GM12878 (cell line): ENCODE measurements at regions of chr6 and their contacts with region 1.

Region 1: DNA sequence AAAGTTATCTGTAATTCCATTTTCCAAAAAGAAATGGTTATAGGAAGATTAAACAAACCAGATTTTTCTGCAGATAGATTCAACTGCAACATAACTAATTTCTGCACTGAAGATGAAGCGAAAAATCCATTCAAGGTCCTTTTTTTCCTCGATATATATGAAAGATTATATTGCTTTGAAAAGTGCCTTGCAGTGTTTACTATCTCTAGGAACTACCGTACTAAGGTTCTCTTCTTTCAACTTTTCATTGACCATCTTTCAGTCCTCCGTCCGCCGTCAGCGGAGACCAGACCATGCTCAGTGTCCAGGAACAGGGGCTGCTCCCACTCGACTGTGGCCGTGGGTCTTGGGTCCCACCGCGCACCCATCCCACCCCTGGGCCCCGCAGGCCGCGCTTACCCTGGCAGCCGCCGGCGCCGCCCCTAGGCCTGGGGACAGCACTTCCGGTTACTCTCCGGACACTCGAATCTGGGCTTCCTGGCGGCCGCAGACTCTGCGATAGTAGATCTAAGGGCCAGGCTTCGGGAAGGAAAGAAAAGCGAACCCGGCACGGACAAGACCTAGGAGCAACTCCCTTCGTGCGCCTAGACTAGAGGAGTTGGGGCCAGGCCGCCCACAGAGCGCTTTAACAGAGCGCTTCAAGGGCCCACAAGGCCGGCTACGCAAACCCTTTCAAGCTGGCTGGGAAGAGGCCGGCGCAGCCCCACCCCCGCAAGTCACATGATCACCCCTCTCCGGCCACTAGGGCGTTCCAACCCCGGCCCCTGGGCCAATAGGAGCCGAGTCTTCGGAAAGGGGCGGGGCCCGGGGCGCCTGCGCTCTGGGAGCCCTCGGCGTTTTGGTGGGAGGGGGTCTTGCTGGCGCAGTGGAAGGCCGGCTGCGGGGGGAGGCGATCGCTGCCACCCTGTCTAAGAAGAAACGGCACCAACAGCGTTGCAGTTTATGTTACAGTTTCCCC is at the start of gene ZNF322:
- DNase-seq: peak; percentile 64
- ATAC-seq: peak; percentile 100
- H3K4me3 ChIP-seq: peak within 1 kb of the TSS; percentile 61
- H3K27ac ChIP-seq: peak within 1 kb of the TSS; percentile 59
- H3K4me1 ChIP-seq: no peaks in the 10 kb centered on the region
- H3K27me3 ChIP-seq: no peaks in the 10 kb centered on the region
- CTCF ChIP-seq: no peak
- EP300 ChIP-seq: no peak
- POLR2A ChIP-seq: peak; percentile 71
- RAD21 ChIP-seq: no peak
- polyA plus RNA-seq, gene ZNF322: 2.7 to 4.0 TPM

Region 2: GRCh38 chr6:27388293-27389197 is 729.2 kb after region 1 on chr6 and contains the start of gene ZNF391:
- CTCF ChIA-PET with region 1: no interaction called
- POLR2A ChIA-PET with region 1: no interaction called
- RAD21 ChIA-PET with region 1: no interaction called
- SMC1A ChIA-PET with region 1: no interaction called
- in situ Hi-C with region 1: loop called (anchors 25 kb)
- intact Hi-C with region 1: no loop called
- DNase-seq: peak; percentile 51
- ATAC-seq: peak; percentile 97
- H3K4me3 ChIP-seq: peak within 1 kb of the TSS; percentile 79
- H3K27ac ChIP-seq: peak within 1 kb of the TSS; percentile 36
- H3K4me1 ChIP-seq: no peaks in the 10 kb centered on the region
- H3K27me3 ChIP-seq: no peaks in the 10 kb centered on the region
- CTCF ChIP-seq: no peak
- EP300 ChIP-seq: no peak
- POLR2A ChIP-seq: peak; percentile 93
- RAD21 ChIP-seq: no peak
- polyA plus RNA-seq, gene ZNF391: 0.42 to 0.57 TPM

Region 3: GRCh38 chr6:27630727-27631608 is 971.6 kb after region 1 on chr6:
- CTCF ChIA-PET with region 1: no interaction called
- POLR2A ChIA-PET with region 1: no interaction called
- RAD21 ChIA-PET with region 1: no interaction called
- SMC1A ChIA-PET with region 1: no interaction called
- in situ Hi-C with region 1: loop called (anchors 25 kb)
- intact Hi-C with region 1: no loop called
- DNase-seq: peak; percentile 49
- ATAC-seq: peak; percentile 97
- H3K4me3 ChIP-seq: peak overlapping the region; percentile 67
- H3K27ac ChIP-seq: no peak overlapping the region
- H3K4me1 ChIP-seq: no peaks in the 10 kb centered on the region
- H3K27me3 ChIP-seq: no peaks in the 10 kb centered on the region
- CTCF ChIP-seq: 0 out of 6 replicates have a peak, but pooled peaks of 1 of the 3 experiments have one; percentile 8
- EP300 ChIP-seq: peak in 1 of 2 experiments; percentile 43; a peak in 1 of 4 replicates
- POLR2A ChIP-seq: no peak
- RAD21 ChIP-seq: no peak

Region 4: DNA sequence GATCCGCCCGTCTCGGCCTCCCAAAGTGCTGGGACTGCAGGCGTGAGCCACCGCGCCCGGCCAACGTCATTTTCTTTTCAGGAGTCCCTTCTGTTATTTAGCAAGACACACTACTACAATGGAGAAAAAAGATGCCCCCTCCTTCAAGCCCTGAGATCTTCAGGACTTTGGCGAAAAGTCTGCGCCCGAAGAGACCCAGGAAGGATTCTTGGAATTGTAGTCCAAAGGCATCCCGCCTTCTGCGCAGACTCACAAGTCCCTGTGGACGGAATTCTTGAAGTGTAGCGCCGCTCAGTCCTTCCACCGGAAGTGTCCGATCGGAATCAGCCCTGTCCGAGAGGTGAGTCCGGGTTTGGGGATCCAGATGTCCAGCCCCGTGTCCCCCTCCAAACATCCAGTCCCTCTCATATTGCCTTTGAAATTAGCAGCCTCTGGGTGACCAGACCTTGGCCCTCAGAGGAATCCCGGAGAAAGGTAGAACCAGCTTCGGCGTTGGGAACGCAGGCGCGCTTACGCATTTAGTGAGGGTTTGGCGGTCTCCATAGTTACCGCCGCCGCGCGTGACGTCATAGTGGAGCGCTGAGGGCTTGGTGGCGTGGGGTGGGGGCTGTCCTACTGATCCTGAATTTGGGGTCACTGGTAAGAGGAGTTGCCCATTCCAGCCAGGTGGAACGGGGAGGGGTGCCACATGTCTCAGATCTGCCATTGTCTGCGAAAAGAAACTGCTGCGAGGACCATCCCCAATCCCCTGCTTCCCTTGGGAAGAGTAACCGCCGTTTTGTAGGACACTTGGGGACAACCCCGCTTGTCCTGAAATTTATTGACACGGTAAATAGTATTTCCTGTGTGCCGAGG is 1421.5 kb after region 1 on chr6:
- CTCF ChIA-PET with region 1: no interaction called
- POLR2A ChIA-PET with region 1: no interaction called
- RAD21 ChIA-PET with region 1: no interaction called
- SMC1A ChIA-PET with region 1: no interaction called
- in situ Hi-C with region 1: loop called (anchors 25 kb)
- intact Hi-C with region 1: no loop called
- DNase-seq: peak; percentile 91
- ATAC-seq: peak; percentile 81
- H3K4me3 ChIP-seq: peak overlapping the region; percentile 79
- H3K27ac ChIP-seq: peak overlapping the region; percentile 94
- H3K4me1 ChIP-seq: peaks cover 6% of the 10 kb centered on the region
- H3K27me3 ChIP-seq: no peaks in the 10 kb centered on the region
- CTCF ChIP-seq: no peak
- EP300 ChIP-seq: peak in 1 of 2 experiments; percentile 6; a peak in 1 of 4 replicates
- POLR2A ChIP-seq: no peak
- RAD21 ChIP-seq: no peak

Region 5: GRCh38 chr6:28335564-28336283 is 1676.4 kb after region 1 on chr6 and contains the start of gene ZSCAN31:
- CTCF ChIA-PET with region 1: no interaction called
- POLR2A ChIA-PET with region 1: no interaction called
- RAD21 ChIA-PET with region 1: no interaction called
- SMC1A ChIA-PET with region 1: no interaction called
- in situ Hi-C with region 1: loop called (anchors 25 kb)
- intact Hi-C with region 1: no loop called
- DNase-seq: peak; percentile 73
- ATAC-seq: peak; percentile 96
- H3K4me3 ChIP-seq: peak within 1 kb of the TSS; percentile 72
- H3K27ac ChIP-seq: peak within 1 kb of the TSS; percentile 97
- H3K4me1 ChIP-seq: peaks cover 14% of the 10 kb centered on the region
- H3K27me3 ChIP-seq: no peaks in the 10 kb centered on the region
- CTCF ChIP-seq: no peak
- EP300 ChIP-seq: no peak
- POLR2A ChIP-seq: peak; percentile 85
- RAD21 ChIP-seq: no peak
- polyA plus RNA-seq, gene ZSCAN31: 1.6 to 2.0 TPM